ENCODE measurements at regions of chr3 and their contacts with region 1.

Region 1: DNA sequence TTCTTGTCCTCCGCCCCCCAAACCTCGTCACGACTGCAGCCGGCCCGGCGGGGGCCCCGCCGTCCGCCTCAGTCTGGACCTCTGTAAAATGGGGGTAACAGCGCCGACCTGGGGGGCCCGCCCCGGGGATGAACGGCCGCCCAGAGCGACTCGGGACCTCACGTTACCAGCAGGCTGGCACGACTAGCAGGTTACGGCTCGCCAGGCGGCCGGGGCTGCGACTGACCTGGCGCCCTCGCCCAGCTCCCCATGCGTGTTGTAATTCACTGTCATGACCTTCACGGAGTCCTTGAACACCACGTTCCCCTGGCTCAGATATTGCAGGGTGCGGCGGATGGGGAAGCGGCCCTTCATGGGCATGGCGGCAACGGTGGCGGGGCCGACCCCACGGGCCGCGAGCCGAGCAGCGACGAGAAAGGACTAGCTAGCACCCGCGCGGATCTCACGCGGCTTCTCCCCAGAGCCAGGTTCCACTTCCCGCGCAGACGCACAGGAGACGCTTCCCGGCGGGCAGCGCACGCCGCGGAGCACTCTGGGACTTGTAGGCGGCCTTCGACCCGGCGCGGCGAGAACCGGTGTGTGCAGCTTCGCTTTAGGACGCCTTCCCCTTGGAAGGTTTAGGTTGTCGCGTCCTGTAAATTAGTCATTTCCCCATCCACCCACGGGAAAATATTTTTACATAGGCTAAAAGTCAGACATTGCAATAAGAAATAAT is at the start of gene MRPS25:
- DNase-seq: peak; percentile 90
- H3K4me3 Mint-ChIP-seq: peak within 1 kb of the TSS; percentile 80
- H3K27ac Mint-ChIP-seq: peak within 1 kb of the TSS; percentile 93
- H3K4me1 Mint-ChIP-seq: peaks cover 10% of the 10 kb centered on the region
- H3K27me3 Mint-ChIP-seq: no peaks in the 10 kb centered on the region
- CTCF ChIP-seq: no peak
- total RNA-seq, gene MRPS25: 81.0 and 87.2 TPM in 2 replicates

Region 2: DNA sequence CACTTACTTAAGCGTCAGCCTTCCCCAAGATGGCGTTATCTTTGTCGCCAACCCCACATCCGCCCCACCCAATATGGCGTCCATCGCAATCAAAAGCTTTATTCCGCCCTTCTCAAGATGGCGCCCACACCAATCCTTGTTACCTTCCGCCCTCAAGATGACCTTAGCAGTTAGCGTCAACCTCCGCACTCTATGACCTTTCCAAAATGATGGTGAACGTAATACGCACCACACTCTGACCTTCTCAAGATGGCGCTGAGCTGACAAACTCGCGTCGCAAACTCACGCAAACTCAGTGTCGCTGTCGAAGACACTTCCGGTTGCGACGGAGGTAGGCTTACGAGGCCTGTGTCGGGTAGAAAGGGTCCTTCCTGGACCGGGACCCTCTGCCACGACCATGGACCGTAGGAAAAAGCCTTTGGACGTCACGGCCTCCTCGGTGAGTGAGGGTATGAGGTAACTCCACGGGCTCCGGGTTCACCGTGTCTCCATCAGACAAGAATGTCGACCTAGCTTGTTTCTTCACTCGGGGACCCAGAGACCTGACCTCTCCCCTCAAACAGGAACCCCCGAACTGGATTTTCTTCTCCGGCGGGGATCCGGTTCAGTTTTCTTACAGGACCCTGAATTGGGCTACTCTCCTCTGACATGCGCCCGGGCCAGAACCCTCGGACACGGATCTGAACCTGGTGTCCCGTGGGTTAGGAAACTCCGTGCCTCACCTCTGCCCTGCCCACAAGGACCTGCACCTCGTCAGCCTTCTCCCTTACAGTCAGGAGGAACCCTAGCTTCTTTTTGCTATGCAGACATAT is 413.3 kb before region 1 on chr3 and contains the start of gene CCDC174:
- CTCF ChIA-PET with region 1: no interaction called
- POLR2A ChIA-PET with region 1: interaction called, 10 read pairs
- intact Hi-C with region 1: no loop called
- DNase-seq: peak; percentile 99
- H3K4me3 Mint-ChIP-seq: peak within 1 kb of the TSS; percentile 99
- H3K27ac Mint-ChIP-seq: peak within 1 kb of the TSS; percentile 99
- H3K4me1 Mint-ChIP-seq: peaks cover 12% of the 10 kb centered on the region
- H3K27me3 Mint-ChIP-seq: no peaks in the 10 kb centered on the region
- CTCF ChIP-seq: no peak
- total RNA-seq, gene CCDC174: 25.4 and 28.7 TPM in 2 replicates

Region 3: GRCh38 chr3:14947886-14948555 is 117.0 kb before region 1 on chr3:
- CTCF ChIA-PET with region 1: no interaction called
- POLR2A ChIA-PET with region 1: interaction called, 12 read pairs
- intact Hi-C with region 1: no loop called
- DNase-seq: peak; percentile 95
- H3K4me3 Mint-ChIP-seq: peak overlapping the region; percentile 99
- H3K27ac Mint-ChIP-seq: peak overlapping the region; percentile 99
- H3K4me1 Mint-ChIP-seq: peaks cover 24% of the 10 kb centered on the region
- H3K27me3 Mint-ChIP-seq: no peaks in the 10 kb centered on the region
- CTCF ChIP-seq: no peak

Region 4: GRCh38 chr3:15049584-15049983 is 15.4 kb before region 1 on chr3:
- CTCF ChIA-PET with region 1: interaction called, 4 read pairs
- POLR2A ChIA-PET with region 1: interaction called, 23 read pairs
- intact Hi-C with region 1: no loop called
- DNase-seq: no peak
- H3K4me3 Mint-ChIP-seq: no peak overlapping the region
- H3K27ac Mint-ChIP-seq: no peak overlapping the region
- H3K4me1 Mint-ChIP-seq: no peaks in the 10 kb centered on the region
- H3K27me3 Mint-ChIP-seq: no peaks in the 10 kb centered on the region
- CTCF ChIP-seq: no peak

Region 5: DNA sequence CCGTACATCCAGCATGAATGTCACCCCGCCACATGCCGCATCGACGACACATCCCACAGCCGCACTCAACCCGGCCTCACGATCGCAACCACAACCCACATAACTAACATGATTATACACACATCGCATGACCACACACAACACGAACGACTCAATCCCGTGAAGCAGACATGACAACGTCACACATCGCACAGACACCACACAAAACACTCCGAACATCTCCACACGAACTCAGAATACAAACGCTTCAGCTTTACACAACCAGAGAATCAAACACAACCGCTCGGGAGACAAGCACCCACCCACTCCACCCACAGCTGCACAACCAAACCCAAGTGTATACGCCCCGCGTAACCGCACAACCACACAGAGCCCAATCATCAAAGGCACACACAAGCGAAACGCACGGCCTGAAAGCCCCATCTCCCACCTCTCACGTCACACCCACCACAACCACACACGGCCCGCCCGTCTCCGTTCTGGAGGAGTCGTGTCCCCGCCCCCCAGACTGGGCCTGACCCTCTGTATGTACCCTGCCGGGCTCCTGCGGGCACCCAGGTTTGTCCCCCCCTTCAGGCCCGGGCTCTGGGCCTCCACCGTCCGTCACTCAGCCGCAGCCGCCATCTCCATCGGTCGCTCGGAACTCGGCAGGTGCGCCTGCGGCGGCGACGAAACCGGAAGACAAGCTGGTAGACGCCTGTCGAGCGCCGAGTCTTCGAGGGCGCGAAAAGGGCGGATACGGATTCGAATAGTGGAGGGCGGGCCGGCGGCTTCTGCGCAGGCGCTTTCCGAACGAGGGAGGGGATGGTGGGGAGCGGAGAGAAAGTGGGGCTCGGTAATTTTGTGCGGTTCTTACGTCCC is 33.7 kb after region 1 on chr3 and contains the start of gene RBSN:
- CTCF ChIA-PET with region 1: interaction called, 4 read pairs
- POLR2A ChIA-PET with region 1: interaction called, 49 read pairs
- intact Hi-C with region 1: loop called (anchors 2 kb)
- DNase-seq: peak; percentile 94
- H3K4me3 Mint-ChIP-seq: peak within 1 kb of the TSS; percentile 84
- H3K27ac Mint-ChIP-seq: peak within 1 kb of the TSS; percentile 82
- H3K4me1 Mint-ChIP-seq: peaks cover 30% of the 10 kb centered on the region
- H3K27me3 Mint-ChIP-seq: no peaks in the 10 kb centered on the region
- CTCF ChIP-seq: no peak
- total RNA-seq, gene RBSN: 37.7 and 39.6 TPM in 2 replicates

Region 6: DNA sequence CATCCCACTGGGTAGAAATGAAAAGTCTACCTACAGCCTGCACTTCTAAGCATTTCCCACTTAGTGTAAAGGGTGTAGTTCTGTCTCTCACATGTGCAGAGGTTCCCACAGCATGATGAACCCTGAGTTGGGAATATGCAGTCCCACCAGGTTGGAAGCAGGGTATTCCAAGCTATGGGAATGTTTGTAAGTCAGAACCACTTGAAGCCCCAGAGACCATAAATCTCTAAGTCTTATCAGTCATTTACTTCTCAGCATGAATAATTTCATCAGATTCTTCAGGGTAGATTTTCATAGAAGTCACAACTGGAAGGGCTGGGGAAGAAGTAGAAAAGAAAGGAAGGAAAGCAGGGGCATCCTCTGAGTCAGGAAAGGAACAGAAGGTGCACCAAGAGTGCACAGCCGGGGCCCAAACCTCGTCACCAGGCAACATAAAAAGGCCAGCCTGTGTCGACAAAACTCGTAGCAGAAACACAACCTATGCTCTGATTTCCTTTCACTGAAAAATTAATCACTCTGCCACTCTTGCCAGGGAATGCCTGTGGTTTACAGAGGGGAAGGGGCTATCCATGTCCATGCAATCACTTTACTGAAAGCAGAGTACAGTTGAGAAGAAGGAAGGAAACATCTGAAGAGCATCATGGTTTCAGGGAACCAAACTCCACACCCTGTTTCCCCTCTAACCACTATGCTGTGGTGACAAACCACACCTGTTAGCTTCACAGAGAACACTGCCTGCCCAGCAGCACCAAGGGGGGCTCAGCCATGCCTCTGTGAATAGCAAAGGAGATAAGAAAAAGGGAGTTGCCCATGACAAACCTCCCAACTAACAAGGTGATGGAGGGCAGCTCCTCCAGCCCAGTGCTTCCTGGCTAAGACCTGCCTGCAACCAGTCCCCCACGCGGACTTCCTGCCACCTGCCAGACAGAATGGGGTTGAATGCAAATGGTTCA is 226.9 kb after region 1 on chr3:
- CTCF ChIA-PET with region 1: no interaction called
- POLR2A ChIA-PET with region 1: no interaction called
- intact Hi-C with region 1: no loop called
- DNase-seq: no peak
- H3K4me3 Mint-ChIP-seq: no peak overlapping the region
- H3K27ac Mint-ChIP-seq: no peak overlapping the region
- H3K4me1 Mint-ChIP-seq: peaks cover 10% of the 10 kb centered on the region
- H3K27me3 Mint-ChIP-seq: no peaks in the 10 kb centered on the region
- CTCF ChIP-seq: no peak